H1 (cell line): ENCODE measurements at regions of chr20 and their contacts with region 1.

Region 1: DNA sequence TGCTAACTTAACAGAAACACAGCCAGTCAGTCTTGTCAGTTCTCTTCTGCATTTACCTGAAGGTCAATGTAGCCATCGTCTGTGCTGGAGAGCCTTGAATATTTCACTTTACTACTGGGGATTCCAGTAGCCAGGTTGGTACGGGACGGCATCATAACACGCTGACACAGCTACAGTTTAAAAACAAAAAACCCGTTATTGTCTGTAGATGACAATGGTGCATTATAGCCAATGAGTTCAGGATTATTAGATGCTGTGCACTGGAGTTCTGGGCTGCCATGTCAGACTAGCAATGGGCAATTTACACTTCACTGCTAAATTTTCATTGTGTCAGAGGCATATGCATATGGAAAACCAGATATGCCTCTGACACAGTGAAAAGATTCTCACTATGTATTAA is 10.5 kb downstream of the PCNA start:
- DNase-seq: no peak
- H3K4me3 ChIP-seq: no peak overlapping the region
- H3K27ac ChIP-seq: no peak overlapping the region
- H3K4me1 ChIP-seq: no peaks in the 10 kb centered on the region
- H3K27me3 ChIP-seq: no peaks in the 10 kb centered on the region
- CTCF ChIP-seq: no peak
- EP300 ChIP-seq: no peak
- POLR2A ChIP-seq: no peak
- RAD21 ChIP-seq: no peak

Region 2: GRCh38 chr20:4966826-4967751 is 142.2 kb before region 1 on chr20:
- CTCF ChIA-PET with region 1: no interaction called
- POLR2A ChIA-PET with region 1: no interaction called
- DNase-seq: no peak
- H3K4me3 ChIP-seq: no peak overlapping the region
- H3K27ac ChIP-seq: no peak overlapping the region
- H3K4me1 ChIP-seq: peaks cover 0 to 2% (median 0%) of the 10 kb centered on the region in 4 experiments; a peak in 1 of 7 replicates
- H3K27me3 ChIP-seq: peaks cover 0 to 1% (median 0%) of the 10 kb centered on the region in 4 experiments; a peak in 1 of 7 replicates
- CTCF ChIP-seq: no peak
- EP300 ChIP-seq: no peak
- POLR2A ChIP-seq: no peak
- RAD21 ChIP-seq: no peak

Region 3: GRCh38 chr20:5119435-5120188 is 10.3 kb after region 1 on chr20 and contains the start of gene PCNA:
- CTCF ChIA-PET with region 1: no interaction called
- POLR2A ChIA-PET with region 1: interaction called, 23 read pairs
- DNase-seq: peak; percentile 92 to 93
- H3K4me3 ChIP-seq: peak within 1 kb of the TSS; percentile 91 to 99 (median 96)
- H3K27ac ChIP-seq: peak within 1 kb of the TSS; percentile 99
- H3K4me1 ChIP-seq: peaks cover 0 to 1% (median 0%) of the 10 kb centered on the region in 4 experiments; a peak in 1 of 7 replicates
- H3K27me3 ChIP-seq: no peaks in the 10 kb centered on the region
- CTCF ChIP-seq: no peak
- EP300 ChIP-seq: no peak
- POLR2A ChIP-seq: peak; percentile 99 to 100
- RAD21 ChIP-seq: no peak
- total RNA-seq, gene PCNA: 286 and 290 TPM in 2 replicates